T-cell (primary cell): ENCODE measurements at regions of chr7 and their contacts with region 1.

Region 1: DNA sequence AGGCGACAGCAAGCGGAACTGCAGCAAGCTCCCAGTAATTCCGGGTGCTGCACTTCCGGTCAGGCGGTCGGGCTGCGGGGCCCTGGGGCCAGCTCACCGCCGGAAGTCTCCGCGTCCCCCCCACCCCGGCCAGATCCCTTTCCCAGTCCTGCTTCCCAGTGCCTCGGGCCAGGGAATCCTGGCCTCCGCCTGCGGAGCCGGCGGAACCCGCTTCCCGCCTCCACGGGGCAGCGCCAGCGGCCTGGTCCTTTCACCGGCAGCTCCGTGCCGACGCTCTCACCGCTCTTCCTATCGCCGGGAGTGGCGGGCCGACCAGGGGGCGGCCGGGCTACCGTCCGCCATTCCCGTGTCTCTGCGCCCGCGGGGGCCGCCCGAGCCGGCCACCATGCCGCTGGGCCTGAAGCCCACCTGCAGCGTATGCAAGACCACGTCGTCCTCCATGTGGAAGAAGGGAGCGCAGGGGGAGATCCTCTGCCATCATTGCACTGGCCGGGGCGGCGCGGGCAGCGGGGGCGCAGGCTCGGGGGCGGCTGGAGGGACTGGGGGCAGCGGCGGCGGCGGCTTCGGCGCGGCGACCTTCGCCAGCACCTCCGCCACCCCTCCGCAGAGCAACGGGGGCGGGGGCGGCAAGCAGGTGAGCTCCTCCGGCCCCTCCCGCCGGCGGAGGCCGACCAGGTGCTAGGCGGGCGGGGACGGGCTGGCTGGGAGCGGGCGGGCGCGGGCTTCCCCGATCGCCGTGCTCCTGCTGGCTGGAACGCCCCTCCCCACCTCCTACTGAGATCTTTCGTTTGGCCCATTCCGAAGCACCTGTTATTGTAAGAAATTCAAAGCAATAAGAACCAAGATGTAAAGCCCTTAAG is at the start of gene GATAD1:
- DNase-seq: peak; percentile 55 to 89 (median 71)
- ATAC-seq: peak; percentile 80 to 86 (median 81)
- H3K4me3 ChIP-seq: peak within 1 kb of the TSS; percentile 78 to 91
- H3K4me3 Mint-ChIP-seq: peak within 1 kb of the TSS; percentile 87 to 90 (median 89)
- H3K27ac ChIP-seq: peak within 1 kb of the TSS; percentile 96
- H3K27ac Mint-ChIP-seq: peak within 1 kb of the TSS; percentile 90 to 98
- H3K4me1 ChIP-seq: peaks cover 2 to 14% of the 10 kb centered on the region in 2 experiments
- H3K4me1 Mint-ChIP-seq: peaks cover 18 to 23% (median 19%) of the 10 kb centered on the region in 3 donors
- H3K27me3 ChIP-seq: no peaks in the 10 kb centered on the region
- H3K27me3 Mint-ChIP-seq: no peaks in the 10 kb centered on the region
- total RNA-seq, gene GATAD1: 19.4 to 31.4 (median 28.1) TPM

Region 2: DNA sequence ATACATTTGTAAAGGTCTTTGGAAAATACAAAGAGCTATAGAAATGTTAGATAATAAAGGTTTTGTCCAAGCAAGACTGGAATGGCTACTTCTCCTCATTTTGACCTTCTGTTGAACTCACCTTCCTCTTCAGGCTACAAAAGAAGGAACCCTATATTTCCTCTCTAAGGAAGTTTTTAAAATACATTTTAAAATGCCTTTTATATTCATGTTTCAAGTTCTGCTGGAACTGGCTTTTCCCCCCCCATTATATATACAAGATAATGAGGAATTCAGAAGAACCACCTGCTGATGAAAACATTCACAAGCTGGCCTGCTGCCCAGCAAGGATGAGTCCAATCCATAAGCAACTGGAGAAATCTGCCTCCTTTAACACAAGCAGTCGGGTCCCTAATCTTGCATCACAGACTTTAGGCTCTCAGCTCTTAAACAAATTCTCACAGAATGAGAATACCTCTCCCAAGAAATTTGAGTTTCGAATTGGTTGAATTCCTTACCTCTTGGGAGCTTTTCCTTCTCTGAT is 611.7 kb before region 1 on chr7:
- CTCF ChIA-PET with region 1: interaction called, 3 to 17 read pairs
- POLR2A ChIA-PET with region 1: no interaction called
- DNase-seq: no peak
- ATAC-seq: no peak
- H3K4me3 ChIP-seq: no peak overlapping the region
- H3K4me3 Mint-ChIP-seq: no peak overlapping the region
- H3K27ac ChIP-seq: no peak overlapping the region
- H3K27ac Mint-ChIP-seq: no peak overlapping the region
- H3K4me1 ChIP-seq: no peaks in the 10 kb centered on the region
- H3K4me1 Mint-ChIP-seq: no peaks in the 10 kb centered on the region
- H3K27me3 ChIP-seq: no peaks in the 10 kb centered on the region
- H3K27me3 Mint-ChIP-seq: no peaks in the 10 kb centered on the region

Region 3: DNA sequence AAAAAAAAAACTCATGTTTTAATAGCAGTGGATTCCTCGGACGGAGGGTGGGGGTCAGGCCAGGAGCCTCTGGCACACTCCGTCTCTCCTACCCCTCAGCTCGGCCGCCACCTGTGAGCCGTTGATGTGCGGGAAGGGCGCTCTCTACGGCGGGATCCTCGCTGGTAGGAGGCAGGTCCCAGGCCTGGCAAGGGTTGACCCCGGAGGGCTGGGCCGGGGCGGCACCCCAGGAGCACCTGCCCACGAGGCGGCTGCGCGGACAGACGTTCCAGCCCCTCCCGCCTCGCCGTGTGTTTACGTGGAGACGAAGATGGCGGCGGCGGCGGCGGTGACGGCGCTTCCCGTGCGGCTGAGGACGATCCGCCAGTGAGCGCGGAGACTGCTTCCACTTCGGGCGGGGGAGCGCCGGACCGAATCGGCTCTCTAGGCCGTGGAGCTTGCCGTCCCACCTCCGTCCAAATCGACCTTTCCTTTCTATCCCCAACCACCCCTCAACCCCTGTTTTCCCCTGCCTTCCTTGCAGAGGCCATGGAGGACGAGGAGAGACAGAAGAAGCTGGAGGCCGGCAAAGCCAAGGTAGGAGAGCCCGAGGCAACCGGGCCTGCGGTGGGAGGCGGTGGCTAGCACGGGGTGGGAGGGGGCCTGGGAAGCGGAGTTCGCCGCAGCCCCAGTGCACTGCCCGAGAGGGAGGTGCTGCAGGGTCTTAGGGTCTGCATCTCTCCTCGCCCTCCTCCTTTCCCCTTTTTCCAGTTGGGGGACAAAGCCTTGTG is 506.8 kb before region 1 on chr7 and contains the start of gene AKAP9:
- CTCF ChIA-PET with region 1: interaction called, 3 to 11 read pairs
- POLR2A ChIA-PET with region 1: interaction called, 3 read pairs
- DNase-seq: peak; percentile 70 to 93 (median 85)
- ATAC-seq: peak; percentile 91 to 96 (median 94)
- H3K4me3 ChIP-seq: peak within 1 kb of the TSS; percentile 84 to 86
- H3K4me3 Mint-ChIP-seq: peak within 1 kb of the TSS; percentile 87 to 92 (median 89)
- H3K27ac ChIP-seq: peak within 1 kb of the TSS; percentile 92
- H3K27ac Mint-ChIP-seq: peak within 1 kb of the TSS; percentile 87 to 97
- H3K4me1 ChIP-seq: peaks cover 15 to 20% of the 10 kb centered on the region in 2 experiments
- H3K4me1 Mint-ChIP-seq: peaks cover 43 to 45% (median 45%) of the 10 kb centered on the region in 3 donors
- H3K27me3 ChIP-seq: no peaks in the 10 kb centered on the region
- H3K27me3 Mint-ChIP-seq: no peaks in the 10 kb centered on the region
- total RNA-seq, gene AKAP9: 59.6 to 83.3 (median 69.0) TPM

Region 4: DNA sequence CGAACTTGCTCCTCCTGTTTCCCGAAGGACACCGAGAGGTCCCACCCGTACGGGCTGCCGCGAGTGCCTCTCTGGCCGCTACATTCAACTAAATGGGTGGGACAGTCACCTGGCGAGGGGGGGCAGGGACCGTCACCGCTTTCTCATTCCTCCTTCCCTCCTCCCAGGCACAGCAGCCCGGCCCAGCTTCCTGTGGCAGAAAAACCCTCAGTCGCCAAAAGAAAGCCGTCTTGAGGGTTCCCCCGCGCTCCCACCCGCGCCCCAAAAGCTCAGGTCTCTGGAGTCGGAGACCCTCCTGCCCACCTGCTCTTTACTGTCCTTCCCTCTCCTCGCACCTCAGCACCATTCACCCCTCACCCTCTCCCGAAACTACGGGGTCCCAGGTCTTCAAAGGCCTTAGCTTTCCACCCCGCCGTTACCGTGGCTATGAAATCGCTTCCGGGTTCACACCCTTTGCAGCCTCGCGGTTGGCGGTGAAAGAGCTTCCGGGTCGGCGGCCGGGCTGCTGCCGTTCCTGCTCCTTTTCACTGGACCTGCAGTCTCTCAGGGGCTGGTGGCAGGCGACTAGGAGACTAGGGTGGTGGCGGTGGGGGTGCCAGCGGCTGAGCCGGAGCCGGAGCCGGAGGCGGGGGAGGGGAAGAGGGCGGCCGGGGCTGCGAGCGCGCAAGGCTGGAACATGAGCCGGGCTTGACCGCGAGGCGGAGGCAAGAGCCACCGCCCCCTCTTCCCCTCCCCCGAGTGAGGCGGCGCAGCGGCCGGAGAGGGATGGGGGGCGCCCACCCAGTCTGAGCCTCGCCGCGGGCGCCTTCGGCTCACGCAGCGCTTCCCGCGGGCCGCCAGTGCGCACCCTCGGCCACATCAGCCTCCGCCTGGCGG is 201.8 kb before region 1 on chr7 and contains the starts of genes ANKIB1 and KRIT1:
- CTCF ChIA-PET with region 1: interaction called, 4 to 31 read pairs
- POLR2A ChIA-PET with region 1: no interaction called
- DNase-seq: peak; percentile 71 to 92 (median 84)
- ATAC-seq: peak; percentile 82 to 87 (median 86)
- H3K4me3 ChIP-seq: peak within 1 kb of the TSS; percentile 61 to 89
- H3K4me3 Mint-ChIP-seq: peak within 1 kb of the TSS; percentile 95 to 99 (median 99)
- H3K27ac ChIP-seq: peak within 1 kb of the TSS; percentile 87
- H3K27ac Mint-ChIP-seq: peak within 1 kb of the TSS; percentile 98
- H3K4me1 ChIP-seq: peaks cover 10 to 25% of the 10 kb centered on the region in 2 experiments
- H3K4me1 Mint-ChIP-seq: peaks cover 45 to 55% (median 54%) of the 10 kb centered on the region in 3 donors
- H3K27me3 ChIP-seq: no peaks in the 10 kb centered on the region
- H3K27me3 Mint-ChIP-seq: no peaks in the 10 kb centered on the region
- total RNA-seq, gene ANKIB1: 59.8 to 86.0 (median 62.5) TPM
- total RNA-seq, gene KRIT1: 44.8 to 65.6 (median 48.9) TPM

Region 5: DNA sequence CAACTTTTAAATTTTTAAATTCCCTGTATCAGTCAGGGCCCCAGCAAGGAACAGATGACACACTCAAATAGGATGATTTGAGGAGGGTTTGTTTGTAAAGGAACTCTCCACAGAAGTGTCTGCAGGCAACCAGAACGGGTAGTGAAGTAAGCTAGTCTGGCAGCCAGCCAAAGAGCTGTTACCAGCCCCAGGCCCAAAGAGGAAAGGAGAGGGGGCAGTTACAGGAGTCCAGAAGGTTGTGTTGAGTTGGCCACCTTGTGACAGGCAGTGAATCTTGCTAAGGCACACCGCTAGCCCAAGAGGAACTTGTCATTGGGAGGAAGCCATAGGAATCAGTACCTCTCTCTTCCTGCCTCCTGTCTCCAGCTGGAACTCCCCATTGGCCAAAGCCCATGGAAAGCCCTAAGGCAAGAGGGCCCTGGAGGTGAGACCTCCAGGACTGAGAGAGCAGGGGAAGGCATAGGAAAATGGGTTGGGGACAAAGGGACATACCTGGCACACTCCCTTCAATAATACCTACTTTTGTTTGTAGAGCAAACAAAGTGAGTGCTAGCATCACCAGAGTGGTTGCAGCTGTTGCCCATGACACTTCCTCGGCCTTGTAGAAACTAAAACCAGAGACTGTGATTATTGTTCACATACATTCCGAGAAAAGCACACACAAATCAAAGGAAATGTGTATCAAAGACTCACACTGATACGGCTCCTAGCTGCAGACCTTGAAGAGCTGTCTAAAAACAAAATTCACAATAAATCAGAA is 25.7 kb before region 1 on chr7:
- CTCF ChIA-PET with region 1: interaction called, 62 to 66 read pairs
- POLR2A ChIA-PET with region 1: no interaction called
- DNase-seq: no peak
- ATAC-seq: no peak
- H3K4me3 ChIP-seq: no peak overlapping the region
- H3K4me3 Mint-ChIP-seq: no peak overlapping the region
- H3K27ac ChIP-seq: no peak overlapping the region
- H3K27ac Mint-ChIP-seq: no peak overlapping the region
- H3K4me1 ChIP-seq: peaks cover 0 to 8% of the 10 kb centered on the region in 2 experiments
- H3K4me1 Mint-ChIP-seq: peaks cover 6 to 13% (median 11%) of the 10 kb centered on the region in 3 donors
- H3K27me3 ChIP-seq: peaks cover 0 to 13% of the 10 kb centered on the region in 2 experiments
- H3K27me3 Mint-ChIP-seq: peaks cover 7 to 16% of the 10 kb centered on the region in 2 donors

Region 6: DNA sequence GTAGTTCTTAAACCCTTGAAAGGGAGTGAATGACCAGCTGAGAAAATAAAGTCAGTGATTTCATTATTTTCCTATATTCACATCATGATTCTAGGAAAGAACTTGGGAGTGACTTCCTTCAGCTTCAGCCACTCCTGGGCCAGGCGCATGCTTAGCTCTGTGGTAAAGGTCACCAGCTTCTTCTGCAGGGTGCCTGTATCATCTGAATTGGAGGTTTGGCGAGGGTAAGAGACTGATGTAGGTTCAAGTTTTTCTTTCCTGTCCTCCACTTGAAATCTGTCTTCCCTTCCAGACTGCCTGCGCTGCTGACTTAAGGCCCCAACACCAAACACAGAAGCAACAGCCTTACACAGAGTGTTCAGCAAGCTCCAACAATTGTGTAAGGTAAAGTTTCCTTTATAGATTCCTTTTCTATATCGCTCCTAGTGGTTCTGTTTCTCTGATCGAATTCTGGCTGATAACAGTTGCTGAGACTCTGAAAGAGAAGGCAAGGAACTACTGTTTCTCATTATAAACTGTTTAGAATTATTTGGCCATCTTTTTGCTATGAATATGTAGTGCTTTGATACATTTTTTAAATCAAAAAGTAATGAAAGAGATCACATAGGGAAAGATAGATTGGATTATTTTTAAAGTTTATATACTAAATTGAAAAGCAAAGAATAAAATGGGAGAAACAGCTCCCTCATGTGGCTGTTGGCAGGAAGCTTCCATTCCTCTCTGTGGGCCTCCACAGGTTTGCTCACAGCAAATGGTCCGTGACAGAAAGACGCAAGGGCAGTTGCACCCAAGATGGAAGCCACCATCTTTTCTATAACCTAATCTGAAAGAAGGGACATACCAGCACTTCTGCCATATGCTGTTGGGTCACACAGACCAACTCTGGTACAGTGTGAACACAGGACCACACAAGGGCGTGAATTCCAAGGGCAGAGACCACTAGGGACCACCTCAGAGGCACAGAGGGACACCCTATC is 13.7 kb after region 1 on chr7:
- CTCF ChIA-PET with region 1: interaction called, 7 to 18 read pairs
- POLR2A ChIA-PET with region 1: interaction called in 1 of 2 experiments, 3 read pairs
- DNase-seq: peak in 16 of 35 experiments; percentile 1 to 51 (median 6)
- ATAC-seq: peak; percentile 48 to 70 (median 60)
- H3K4me3 ChIP-seq: no peak overlapping the region
- H3K4me3 Mint-ChIP-seq: no peak overlapping the region
- H3K27ac ChIP-seq: no peak overlapping the region
- H3K27ac Mint-ChIP-seq: no peak overlapping the region
- H3K4me1 ChIP-seq: peaks cover 0 to 2% of the 10 kb centered on the region in 2 experiments
- H3K4me1 Mint-ChIP-seq: peaks cover 0 to 2% (median 0%) of the 10 kb centered on the region in 3 donors
- H3K27me3 ChIP-seq: no peaks in the 10 kb centered on the region
- H3K27me3 Mint-ChIP-seq: no peaks in the 10 kb centered on the region

Region 7: GRCh38 chr7:92528188-92528957 is 80.8 kb after region 1 on chr7 and contains the starts of genes PEX1 and RBM48:
- CTCF ChIA-PET with region 1: interaction called, 5 to 34 read pairs
- POLR2A ChIA-PET with region 1: interaction called in 1 of 2 experiments, 14 read pairs
- DNase-seq: peak; percentile 85 to 99 (median 96)
- ATAC-seq: peak; percentile 90 to 95 (median 94)
- H3K4me3 ChIP-seq: peak within 1 kb of the TSS; percentile 87 to 96
- H3K4me3 Mint-ChIP-seq: peak within 1 kb of the TSS; percentile 83 to 85 (median 84)
- H3K27ac ChIP-seq: peak within 1 kb of the TSS; percentile 93
- H3K27ac Mint-ChIP-seq: peak within 1 kb of the TSS; percentile 89 to 96
- H3K4me1 ChIP-seq: peaks cover 9 to 19% of the 10 kb centered on the region in 2 experiments
- H3K4me1 Mint-ChIP-seq: peaks cover 43 to 61% (median 49%) of the 10 kb centered on the region in 3 donors
- H3K27me3 ChIP-seq: no peaks in the 10 kb centered on the region
- H3K27me3 Mint-ChIP-seq: no peaks in the 10 kb centered on the region
- total RNA-seq, gene PEX1: 24.0 to 33.8 (median 29.2) TPM
- total RNA-seq, gene RBM48: 23.9 to 37.1 (median 29.6) TPM